Common myeloid progenitor, CD34-positive (primary cell): ENCODE measurements at regions of chr16 and their contacts with region 1.

Region 1: GRCh38 chr16:30941600-30942425 is 7.1 kb upstream of the ORAI3 start:
- DNase-seq: peak; percentile 65 to 72 (median 68)
- H3K4me3 ChIP-seq: peak overlapping the region in 2 of 7 experiments; percentile 19 to 48
- H3K27ac ChIP-seq: peak overlapping the region in 1 of 2 experiments; percentile 40
- H3K4me1 ChIP-seq: peaks cover 0 to 27% (median 19%) of the 10 kb centered on the region in 4 experiments
- H3K27me3 ChIP-seq: no peaks in the 10 kb centered on the region

Region 2: DNA sequence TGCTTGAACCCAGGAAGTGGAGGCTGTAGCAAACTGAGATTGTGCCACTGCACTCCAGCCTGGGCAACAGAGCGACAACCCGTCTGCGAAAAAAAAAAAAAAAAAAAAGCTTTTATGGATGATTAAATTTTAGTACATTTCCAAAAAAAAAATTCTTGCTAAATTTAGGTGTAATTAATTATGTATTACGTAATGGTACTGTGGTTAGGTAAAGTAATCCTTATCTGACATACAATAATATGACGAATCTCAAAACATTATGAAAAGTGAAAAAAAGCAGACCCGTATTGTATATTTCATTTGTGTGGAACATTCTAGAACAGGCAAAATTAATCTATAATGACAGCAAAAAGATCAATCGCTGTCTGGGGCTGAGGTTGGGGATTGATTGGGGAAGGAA is 768.8 kb before region 1 on chr16:
- CTCF ChIA-PET with region 1: no interaction called
- POLR2A ChIA-PET with region 1: no interaction called
- DNase-seq: no peak
- H3K4me3 ChIP-seq: no peak overlapping the region
- H3K27ac ChIP-seq: no peak overlapping the region
- H3K4me1 ChIP-seq: peaks cover 0 to 9% (median 0%) of the 10 kb centered on the region in 4 experiments
- H3K27me3 ChIP-seq: no peaks in the 10 kb centered on the region

Region 3: GRCh38 chr16:30710971-30711370 is 230.8 kb before region 1 on chr16:
- CTCF ChIA-PET with region 1: no interaction called
- POLR2A ChIA-PET with region 1: no interaction called
- DNase-seq: no peak
- H3K4me3 ChIP-seq: no peak overlapping the region
- H3K27ac ChIP-seq: no peak overlapping the region
- H3K4me1 ChIP-seq: no peaks in the 10 kb centered on the region
- H3K27me3 ChIP-seq: no peaks in the 10 kb centered on the region

Region 4: GRCh38 chr16:30927789-30928378 is 13.9 kb before region 1 on chr16:
- CTCF ChIA-PET with region 1: interaction called, 98 read pairs
- POLR2A ChIA-PET with region 1: no interaction called
- DNase-seq: peak in 2 of 3 donors; percentile 67 to 69
- H3K4me3 ChIP-seq: no peak overlapping the region
- H3K27ac ChIP-seq: no peak overlapping the region
- H3K4me1 ChIP-seq: peaks cover 0 to 23% (median 21%) of the 10 kb centered on the region in 4 experiments
- H3K27me3 ChIP-seq: no peaks in the 10 kb centered on the region

Region 5: DNA sequence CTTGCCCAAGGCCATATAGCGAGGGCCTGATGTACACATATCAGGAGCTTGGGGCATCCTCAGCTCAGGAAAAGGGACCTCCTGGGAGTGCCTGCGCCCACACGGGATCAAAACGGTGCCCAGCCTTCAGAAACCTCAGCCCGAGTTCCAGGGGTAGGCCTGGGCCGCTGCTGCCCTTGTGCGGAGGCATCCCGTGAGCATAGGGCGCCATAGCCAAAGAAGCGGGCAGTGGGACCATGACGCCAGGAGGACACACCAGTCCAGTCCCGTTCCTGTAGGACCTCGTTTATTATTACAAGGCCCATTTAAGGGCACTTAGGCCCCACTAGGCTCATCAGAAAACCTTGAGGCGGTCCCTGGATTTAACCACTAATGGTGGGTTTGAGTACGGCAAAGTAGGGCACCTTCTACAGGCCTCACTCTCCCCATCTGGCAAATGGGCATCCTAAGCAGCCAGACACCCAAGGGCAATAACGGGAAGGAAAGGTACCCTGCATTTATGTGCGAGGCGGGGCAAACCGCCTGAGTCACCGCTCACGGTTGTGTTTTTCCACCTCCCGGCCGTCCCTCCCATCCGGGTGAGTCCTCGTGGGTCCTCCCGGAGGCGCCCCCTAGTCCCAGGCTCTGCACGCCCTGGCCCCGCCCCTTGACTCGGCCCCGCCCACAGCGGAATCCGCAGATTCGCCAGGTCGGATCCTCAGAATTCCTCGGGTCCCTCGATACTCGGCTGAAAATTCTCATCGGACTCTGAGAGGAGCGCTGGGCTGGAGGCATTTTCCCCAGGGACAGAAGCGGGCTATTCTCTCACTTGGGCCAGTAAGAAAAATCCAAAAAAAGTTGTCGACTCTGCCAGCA is 15.0 kb after region 1 on chr16:
- CTCF ChIA-PET with region 1: interaction called, 50 read pairs
- POLR2A ChIA-PET with region 1: no interaction called
- DNase-seq: peak; percentile 95 to 97 (median 97)
- H3K4me3 ChIP-seq: peak overlapping the region; percentile 73 to 99 (median 91)
- H3K27ac ChIP-seq: peak overlapping the region; percentile 99
- H3K4me1 ChIP-seq: peaks cover 0 to 36% (median 21%) of the 10 kb centered on the region in 4 experiments
- H3K27me3 ChIP-seq: no peaks in the 10 kb centered on the region

Region 6: GRCh38 chr16:30972872-30973271 is 31.1 kb after region 1 on chr16:
- CTCF ChIA-PET with region 1: no interaction called
- POLR2A ChIA-PET with region 1: no interaction called
- DNase-seq: peak in 1 of 3 donors; percentile 28
- H3K4me3 ChIP-seq: no peak overlapping the region
- H3K27ac ChIP-seq: no peak overlapping the region
- H3K4me1 ChIP-seq: no peaks in the 10 kb centered on the region
- H3K27me3 ChIP-seq: no peaks in the 10 kb centered on the region

Region 7: DNA sequence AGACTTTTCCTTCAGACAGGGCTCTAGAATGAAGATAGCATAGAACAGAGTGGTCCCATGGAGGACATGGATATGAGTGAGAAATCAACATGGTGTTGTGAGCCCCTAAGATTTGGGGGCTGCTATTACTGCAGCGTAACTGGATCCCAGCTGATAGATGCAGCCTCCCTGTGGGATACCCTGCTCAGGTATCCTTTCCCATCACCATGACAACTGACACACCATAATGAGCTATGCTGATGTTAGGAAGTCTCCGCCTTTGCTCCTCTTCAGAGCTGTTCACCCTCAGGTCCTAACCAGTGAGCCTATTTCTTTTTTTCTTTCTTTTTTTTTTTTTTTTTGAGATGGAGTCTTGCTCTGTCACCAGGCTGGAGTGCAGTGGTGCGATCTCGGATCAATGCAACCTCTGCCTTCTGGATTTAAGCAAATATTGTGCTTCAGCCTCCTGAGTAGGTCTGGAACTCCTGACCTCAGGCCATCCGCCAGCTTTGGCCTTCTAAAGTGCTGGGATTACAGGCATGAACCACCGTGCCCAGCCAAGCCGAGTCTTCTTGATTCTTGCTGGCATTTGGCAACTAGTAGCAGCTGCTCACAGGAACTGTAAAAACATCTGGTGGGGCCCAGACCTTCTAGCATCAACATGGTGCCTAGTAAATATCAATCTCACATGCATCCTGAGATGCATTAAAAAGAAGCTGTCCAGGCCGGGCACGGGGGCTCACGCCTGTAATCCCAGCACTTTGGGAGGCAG is 108.6 kb after region 1 on chr16:
- CTCF ChIA-PET with region 1: no interaction called
- POLR2A ChIA-PET with region 1: no interaction called
- DNase-seq: no peak
- H3K4me3 ChIP-seq: no peak overlapping the region
- H3K27ac ChIP-seq: no peak overlapping the region
- H3K4me1 ChIP-seq: peaks cover 0 to 6% (median 5%) of the 10 kb centered on the region in 4 experiments
- H3K27me3 ChIP-seq: no peaks in the 10 kb centered on the region